ENCODE measurements at regions of chr7 and their contacts with region 1.

Region 1: GRCh38 chr7:88628363-88629085 is 131.0 kb upstream of the ZNF804B start:
- DNase-seq: peak; percentile 66
- ATAC-seq: peak; percentile 99
- H3K4me3 ChIP-seq: no peak overlapping the region
- H3K27ac ChIP-seq: peak overlapping the region; percentile 61
- H3K4me1 ChIP-seq: no peaks in the 10 kb centered on the region
- H3K27me3 ChIP-seq: no peaks in the 10 kb centered on the region
- CTCF ChIP-seq: no peak
- EP300 ChIP-seq: peak; percentile 94 to 98
- POLR2A ChIP-seq: no peak
- RAD21 ChIP-seq: no peak

Region 2: GRCh38 chr7:88664630-88665233 is 36.2 kb after region 1 on chr7:
- CTCF ChIA-PET with region 1: no interaction called
- POLR2A ChIA-PET with region 1: no interaction called
- RAD21 ChIA-PET with region 1: no interaction called
- SMC1A ChIA-PET with region 1: interaction called, 5 read pairs
- in situ Hi-C with region 1: no loop called
- intact Hi-C with region 1: loop called (anchors 5 kb)
- DNase-seq: no peak
- ATAC-seq: no peak
- H3K4me3 ChIP-seq: no peak overlapping the region
- H3K27ac ChIP-seq: no peak overlapping the region
- H3K4me1 ChIP-seq: no peaks in the 10 kb centered on the region
- H3K27me3 ChIP-seq: no peaks in the 10 kb centered on the region
- CTCF ChIP-seq: no peak
- EP300 ChIP-seq: no peak
- POLR2A ChIP-seq: no peak
- RAD21 ChIP-seq: no peak

Region 3: DNA sequence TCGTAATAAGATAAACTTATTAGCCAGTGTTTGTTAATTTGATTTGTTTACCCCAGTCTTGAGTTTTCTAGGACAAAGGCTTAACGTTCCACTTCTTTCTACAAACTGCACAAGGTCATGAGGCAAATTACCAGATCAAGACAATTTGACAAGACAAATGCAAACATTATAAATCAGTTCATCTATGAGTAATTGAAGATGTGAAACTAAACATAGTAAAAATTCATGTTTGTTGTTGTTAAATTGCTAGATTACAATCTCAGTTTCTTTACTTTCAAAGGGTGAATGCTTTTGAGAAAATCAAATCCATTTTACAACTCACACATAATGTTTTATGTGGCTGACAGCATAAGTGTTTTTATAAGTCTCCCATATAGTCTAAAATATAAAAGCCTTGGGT is 117.6 kb after region 1 on chr7:
- CTCF ChIA-PET with region 1: no interaction called
- POLR2A ChIA-PET with region 1: no interaction called
- RAD21 ChIA-PET with region 1: no interaction called
- SMC1A ChIA-PET with region 1: no interaction called
- in situ Hi-C with region 1: no loop called
- intact Hi-C with region 1: no loop called
- DNase-seq: no peak
- ATAC-seq: no peak
- H3K4me3 ChIP-seq: no peak overlapping the region
- H3K27ac ChIP-seq: no peak overlapping the region
- H3K4me1 ChIP-seq: no peaks in the 10 kb centered on the region
- H3K27me3 ChIP-seq: no peaks in the 10 kb centered on the region
- CTCF ChIP-seq: no peak
- EP300 ChIP-seq: no peak
- POLR2A ChIP-seq: no peak
- RAD21 ChIP-seq: no peak

Measured in GM12878 (cell line).